A673 (cell line): ENCODE measurements at regions of chr6 and their contacts with region 1.

Region 1: DNA sequence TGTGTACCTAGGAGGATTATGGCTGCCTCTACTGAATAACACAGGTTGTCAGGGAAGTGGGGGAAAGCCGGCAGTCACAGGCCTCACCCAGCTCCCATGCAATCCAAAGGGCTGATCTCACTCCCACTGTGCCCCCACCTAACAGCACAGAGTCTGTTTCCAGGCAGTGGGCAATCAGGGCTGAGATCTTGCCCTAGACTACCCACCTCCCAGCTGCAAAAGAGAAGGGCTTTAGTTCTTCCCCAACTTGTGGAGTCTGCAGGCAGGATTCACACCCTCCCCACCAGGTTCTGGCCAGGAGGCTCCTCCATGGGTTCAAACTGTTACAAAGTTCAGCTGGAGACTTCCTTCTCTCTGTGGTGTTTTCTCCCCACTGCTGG is 66.0 kb upstream of the OLIG3 start:
- DNase-seq: no peak
- H3K4me3 ChIP-seq: no peak overlapping the region
- H3K27ac ChIP-seq: no peak overlapping the region
- H3K4me1 ChIP-seq: no peaks in the 10 kb centered on the region
- H3K27me3 ChIP-seq: no peaks in the 10 kb centered on the region
- CTCF ChIP-seq: no peak

Region 2: DNA sequence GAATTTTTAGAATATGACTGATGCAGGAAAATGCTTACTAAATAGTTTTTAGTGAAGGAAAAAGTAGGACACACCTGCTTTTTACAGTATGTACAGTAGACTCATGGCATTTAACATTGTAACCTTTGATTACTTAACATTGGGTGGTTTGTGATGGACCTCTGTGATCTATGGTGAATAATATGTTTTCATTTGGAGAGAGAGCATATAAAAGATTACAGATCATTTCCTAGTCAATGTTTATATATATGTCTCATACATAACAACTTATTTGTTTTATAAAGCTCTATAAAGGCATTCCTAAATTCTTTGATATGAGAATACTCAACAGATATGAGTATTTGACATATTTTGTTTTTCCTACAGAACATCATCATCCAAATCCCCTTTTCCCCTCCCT is 1838.0 kb before region 1 on chr6:
- CTCF ChIA-PET with region 1: interaction called, 11 read pairs
- POLR2A ChIA-PET with region 1: no interaction called
- intact Hi-C with region 1: no loop called
- DNase-seq: no peak
- H3K4me3 ChIP-seq: no peak overlapping the region
- H3K27ac ChIP-seq: no peak overlapping the region
- H3K4me1 ChIP-seq: no peaks in the 10 kb centered on the region
- H3K27me3 ChIP-seq: no peaks in the 10 kb centered on the region
- CTCF ChIP-seq: no peak